ENCODE measurements at regions of chr7 and their contacts with region 1.

Region 1: GRCh38 chr7:129224251-129225205 is at the start of gene AHCYL2:
- DNase-seq: peak; percentile 98
- H3K4me3 ChIP-seq: peak within 1 kb of the TSS; percentile 74 to 94 (median 79)
- H3K27ac ChIP-seq: peak within 1 kb of the TSS; percentile 92
- H3K4me1 ChIP-seq: peaks cover 22% of the 10 kb centered on the region
- H3K27me3 ChIP-seq: no peaks in the 10 kb centered on the region
- CTCF ChIP-seq: no peak
- POLR2A ChIP-seq: no peak
- total RNA-seq, gene AHCYL2: 11.0 and 13.5 TPM in 2 replicates

Region 2: DNA sequence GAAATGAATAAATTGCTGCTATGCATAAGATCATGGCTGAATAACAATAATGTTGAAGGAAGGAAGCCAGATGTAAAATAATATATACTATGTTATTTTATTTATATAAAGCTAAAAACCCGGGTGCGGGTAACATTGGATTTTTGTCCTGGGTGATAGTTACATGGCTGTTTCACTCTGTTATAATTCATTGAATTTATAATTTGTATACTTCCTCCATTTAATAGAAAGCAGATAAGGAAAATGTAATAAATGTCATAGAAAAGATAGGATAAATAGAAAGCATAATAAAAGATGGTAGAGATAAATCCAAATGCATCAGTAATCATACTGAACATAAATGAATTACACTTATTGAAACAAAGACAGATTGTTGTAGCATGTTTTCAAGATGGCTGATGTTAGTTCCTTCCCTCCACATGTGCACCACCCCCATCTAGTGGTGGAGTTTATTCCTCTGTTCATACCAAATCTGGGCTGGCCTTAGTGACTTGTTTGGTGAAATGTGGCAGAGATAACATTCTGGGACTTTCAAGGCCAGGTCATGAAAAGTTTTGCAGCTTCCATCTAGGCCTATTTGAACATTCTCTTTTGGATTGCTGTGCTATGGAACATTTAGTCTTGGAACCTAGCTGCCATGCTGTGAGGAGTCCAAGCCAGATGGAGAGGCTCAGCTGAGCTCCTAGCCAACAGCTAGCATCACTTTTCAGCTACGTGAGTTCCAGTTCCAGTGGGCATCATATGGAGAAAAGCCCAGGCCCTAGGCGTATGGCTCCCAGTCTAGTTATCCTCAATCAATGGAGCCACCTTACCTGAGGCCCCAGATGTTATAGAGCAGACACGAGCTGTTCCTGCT is 47.2 kb after region 1 on chr7:
- CTCF ChIA-PET with region 1: interaction called, 65 read pairs
- POLR2A ChIA-PET with region 1: no interaction called
- dilution Hi-C with region 1: no loop called
- intact Hi-C with region 1: loop called (anchors 1 kb)
- DNase-seq: peak; percentile 69
- H3K4me3 ChIP-seq: no peak overlapping the region
- H3K27ac ChIP-seq: no peak overlapping the region
- H3K4me1 ChIP-seq: no peaks in the 10 kb centered on the region
- H3K27me3 ChIP-seq: no peaks in the 10 kb centered on the region
- CTCF ChIP-seq: peak; percentile 56 to 62
- POLR2A ChIP-seq: no peak